ENCODE measurements at regions of chr20 and their contacts with region 1.

Region 1: DNA sequence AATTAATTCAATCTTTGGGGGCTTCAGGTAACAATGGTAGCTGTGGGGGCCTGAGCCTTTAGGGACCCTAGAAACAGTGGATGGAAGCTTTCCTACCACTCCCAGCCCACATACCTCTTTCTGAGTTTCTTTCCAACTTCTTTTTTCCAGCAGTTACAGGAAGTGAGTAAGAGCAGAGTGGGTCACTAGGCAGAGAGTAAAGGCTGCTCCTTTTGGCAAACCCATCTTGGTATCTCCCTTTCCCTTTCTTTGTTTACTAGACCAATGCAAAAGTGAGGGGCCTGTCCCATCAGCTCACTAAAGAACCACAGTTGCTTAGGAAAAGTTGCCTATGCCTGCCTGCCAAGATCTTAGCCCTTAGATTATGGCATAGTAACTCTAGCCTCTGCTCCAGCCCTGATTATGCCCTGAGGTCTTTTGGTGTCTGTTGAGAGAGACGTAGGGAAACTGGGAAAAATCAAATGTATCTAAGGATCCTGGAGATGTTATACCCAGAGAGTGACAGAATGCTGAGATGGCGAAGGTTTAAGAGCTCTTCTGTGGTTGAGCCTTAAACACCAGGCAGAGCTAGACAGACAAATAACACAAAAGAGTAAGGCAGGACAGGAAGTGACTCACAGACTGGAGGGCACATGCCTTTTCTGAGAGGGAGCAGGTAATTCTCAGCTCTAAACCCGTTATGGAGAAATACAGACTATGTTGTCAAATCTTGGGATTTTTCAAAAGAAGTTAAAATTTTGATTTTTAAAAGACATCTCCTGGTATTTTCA is 31.3 kb downstream of the TRMT6 start:
- DNase-seq: peak; percentile 86
- H3K4me3 Mint-ChIP-seq: peak overlapping the region; percentile 25
- H3K27ac Mint-ChIP-seq: peak overlapping the region; percentile 71
- H3K4me1 Mint-ChIP-seq: peaks cover 12% of the 10 kb centered on the region
- H3K27me3 Mint-ChIP-seq: no peaks in the 10 kb centered on the region
- CTCF ChIP-seq: no peak

Region 2: DNA sequence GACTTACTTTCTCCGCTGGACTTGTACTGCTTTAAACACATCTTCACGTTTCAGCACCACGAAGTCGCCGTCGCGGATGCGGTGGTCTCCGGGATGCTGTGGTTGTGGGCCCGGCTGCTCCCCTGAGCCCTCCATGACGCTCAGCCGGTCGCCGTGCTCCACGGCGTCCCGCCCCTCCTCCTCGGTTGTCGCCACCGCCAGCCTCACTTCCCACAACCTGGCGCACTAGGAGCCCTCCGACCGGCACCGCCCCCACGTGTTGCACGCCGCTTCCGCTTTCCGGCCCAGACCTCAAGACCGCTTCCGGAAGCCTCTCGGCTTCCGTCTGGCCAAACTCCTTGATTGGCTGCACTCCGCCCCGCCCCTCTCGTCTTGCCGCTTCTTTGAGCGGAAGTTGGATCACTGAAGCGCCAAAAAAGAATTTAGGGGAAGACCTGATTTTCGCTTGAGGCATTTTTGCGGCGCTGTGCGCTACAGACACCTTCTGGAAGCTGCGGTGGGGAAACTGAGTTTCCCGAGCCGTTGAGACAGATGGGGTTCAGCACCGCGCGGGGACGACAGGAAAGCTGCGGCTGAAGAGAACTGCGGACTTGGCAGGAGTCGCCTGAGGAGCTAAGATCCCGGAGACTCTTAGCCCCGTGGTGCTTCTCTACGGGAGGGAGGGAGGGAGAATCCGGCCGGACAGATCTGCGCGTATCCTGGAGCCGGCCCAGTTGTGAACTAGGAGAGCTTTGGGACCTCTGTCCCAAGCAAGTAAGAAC is 31.4 kb after region 1 on chr20 and contains the starts of genes MCM8 and TRMT6:
- CTCF ChIA-PET with region 1: no interaction called
- POLR2A ChIA-PET with region 1: interaction called, 15 read pairs
- intact Hi-C with region 1: no loop called
- DNase-seq: peak; percentile 96
- H3K4me3 Mint-ChIP-seq: peak within 1 kb of the TSS; percentile 99
- H3K27ac Mint-ChIP-seq: peak within 1 kb of the TSS; percentile 59
- H3K4me1 Mint-ChIP-seq: peaks cover 22% of the 10 kb centered on the region
- H3K27me3 Mint-ChIP-seq: no peaks in the 10 kb centered on the region
- CTCF ChIP-seq: no peak
- total RNA-seq, gene MCM8: 8.0 and 12.4 TPM in 2 replicates
- total RNA-seq, gene TRMT6: 31.0 and 44.9 TPM in 2 replicates

Region 3: DNA sequence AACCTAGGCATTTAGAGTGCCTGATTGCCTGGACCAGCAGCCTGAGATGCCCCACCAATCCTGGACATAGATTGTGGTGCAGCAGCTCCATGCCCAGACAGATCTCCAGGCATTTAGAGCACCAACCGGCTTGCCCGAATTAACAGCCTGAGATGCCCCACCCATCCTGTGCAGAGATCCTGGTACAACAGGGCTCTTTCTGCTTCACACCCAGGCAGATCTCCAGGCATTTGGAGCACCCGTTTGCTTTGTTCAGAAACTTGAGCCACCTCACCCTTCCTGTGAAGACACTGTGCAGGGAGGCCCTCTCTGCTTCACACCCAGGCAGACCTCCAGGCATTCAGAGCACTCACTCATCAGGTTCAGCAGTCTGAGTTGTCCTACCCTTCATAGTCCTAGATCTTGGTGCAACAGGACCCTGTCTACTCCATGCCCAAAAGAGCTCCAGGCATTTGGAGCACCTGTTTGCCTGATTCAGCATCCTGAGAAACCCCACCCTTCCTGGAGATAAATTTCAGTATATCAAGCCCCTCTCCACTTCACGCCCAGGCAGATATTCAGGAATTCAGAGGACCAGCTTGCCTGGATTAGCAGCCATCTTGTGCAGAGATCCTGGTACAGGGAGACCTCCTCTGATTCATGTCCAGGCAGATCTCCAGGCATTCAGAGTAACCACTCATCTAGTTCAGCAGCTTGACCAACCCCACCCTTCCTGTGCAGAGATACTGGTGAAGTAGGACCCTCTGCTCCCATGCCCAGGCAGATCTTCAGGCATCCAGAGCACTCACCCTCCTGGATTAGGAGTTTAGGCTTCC is 393.0 kb after region 1 on chr20:
- CTCF ChIA-PET with region 1: no interaction called
- POLR2A ChIA-PET with region 1: no interaction called
- intact Hi-C with region 1: no loop called
- DNase-seq: peak; percentile 37
- H3K4me3 Mint-ChIP-seq: peak overlapping the region; percentile 20
- H3K27ac Mint-ChIP-seq: peak overlapping the region; percentile 87
- H3K4me1 Mint-ChIP-seq: peaks cover 11% of the 10 kb centered on the region
- H3K27me3 Mint-ChIP-seq: no peaks in the 10 kb centered on the region
- CTCF ChIP-seq: no peak